HCT116 (cell line): ENCODE measurements at regions of chr17 and their contacts with region 1.

Region 1: GRCh38 chr17:59440784-59441441 is 109.5 kb downstream of the YPEL2 start:
- DNase-seq: peak; percentile 93
- ATAC-seq: peak; percentile 100
- H3K4me3 ChIP-seq: no peak overlapping the region
- H3K27ac ChIP-seq: no peak overlapping the region
- H3K4me1 ChIP-seq: no peaks in the 10 kb centered on the region
- H3K27me3 ChIP-seq: no peaks in the 10 kb centered on the region
- CTCF ChIP-seq: peak; percentile 97 to 98 (median 97)
- POLR2A ChIP-seq: no peak
- RAD21 ChIP-seq: peak; percentile 99

Region 2: DNA sequence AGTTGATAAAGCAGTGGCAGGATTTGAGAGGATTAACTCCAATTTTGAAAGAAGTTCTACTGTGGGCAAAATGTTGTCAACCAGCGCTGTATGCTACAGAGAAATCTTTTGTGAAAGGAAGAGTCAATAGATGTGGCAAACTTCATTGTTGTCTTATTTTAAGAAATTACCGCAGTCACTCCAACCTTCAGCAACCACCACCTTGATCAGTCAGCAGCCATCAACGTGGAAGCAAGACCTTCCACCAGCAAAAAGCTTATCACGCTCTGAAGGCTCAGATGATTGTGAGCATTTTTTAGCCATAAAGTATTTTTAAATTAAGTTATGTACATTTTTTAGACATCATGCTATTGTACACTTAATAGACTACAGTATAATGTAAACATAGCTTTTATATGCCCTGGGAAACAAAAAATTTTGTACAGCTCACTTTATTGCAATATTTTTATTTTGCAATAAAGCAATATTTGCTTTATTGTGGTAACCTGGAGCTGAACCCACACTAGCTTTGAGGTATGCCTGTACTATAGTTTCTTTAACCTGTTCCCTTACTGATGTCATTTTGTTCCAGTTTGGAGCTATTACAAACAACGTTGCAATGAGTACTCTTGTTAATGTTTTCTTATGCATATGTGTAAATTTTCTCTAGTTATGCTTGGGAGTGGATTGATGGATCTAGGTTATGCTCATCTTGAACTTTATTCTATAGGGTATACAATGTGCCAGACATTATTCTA is 540.6 kb before region 1 on chr17:
- CTCF ChIA-PET with region 1: no interaction called
- POLR2A ChIA-PET with region 1: no interaction called
- RAD21 ChIA-PET with region 1: no interaction called
- intact Hi-C with region 1: no loop called
- DNase-seq: no peak
- ATAC-seq: no peak
- H3K4me3 ChIP-seq: no peak overlapping the region
- H3K27ac ChIP-seq: no peak overlapping the region
- H3K4me1 ChIP-seq: no peaks in the 10 kb centered on the region
- H3K27me3 ChIP-seq: no peaks in the 10 kb centered on the region
- CTCF ChIP-seq: no peak
- POLR2A ChIP-seq: no peak
- RAD21 ChIP-seq: no peak

Region 3: GRCh38 chr17:59220376-59221158 is 220.3 kb before region 1 on chr17 and contains the start of gene GDPD1:
- CTCF ChIA-PET with region 1: no interaction called
- POLR2A ChIA-PET with region 1: no interaction called
- RAD21 ChIA-PET with region 1: no interaction called
- intact Hi-C with region 1: loop called (anchors 2 kb)
- DNase-seq: peak; percentile 89
- ATAC-seq: peak; percentile 97
- H3K4me3 ChIP-seq: peak within 1 kb of the TSS; percentile 90 to 99
- H3K27ac ChIP-seq: peak within 1 kb of the TSS; percentile 63
- H3K4me1 ChIP-seq: peaks cover 15 to 28% of the 10 kb centered on the region in 2 experiments; a peak in 3 of 4 replicates
- H3K27me3 ChIP-seq: no peaks in the 10 kb centered on the region
- CTCF ChIP-seq: peak; percentile 46 to 72 (median 71); a peak in 4 of 6 replicates
- POLR2A ChIP-seq: peak; percentile 73
- RAD21 ChIP-seq: peak; percentile 88
- total RNA-seq, gene GDPD1: 13.7 TPM

Region 4: GRCh38 chr17:59311130-59311920 is 129.6 kb before region 1 on chr17:
- CTCF ChIA-PET with region 1: interaction called, 58 read pairs
- POLR2A ChIA-PET with region 1: interaction called, 3 read pairs
- RAD21 ChIA-PET with region 1: interaction called, 5 to 11 read pairs
- intact Hi-C with region 1: loop called (anchors 1 kb)
- DNase-seq: peak; percentile 78
- ATAC-seq: peak; percentile 93
- H3K4me3 ChIP-seq: no peak overlapping the region
- H3K27ac ChIP-seq: no peak overlapping the region
- H3K4me1 ChIP-seq: peaks cover 3 to 13% of the 10 kb centered on the region in 2 experiments; a peak in 3 of 4 replicates
- H3K27me3 ChIP-seq: no peaks in the 10 kb centered on the region
- CTCF ChIP-seq: peak; percentile 84 to 99 (median 97); a peak in 5 of 6 replicates
- POLR2A ChIP-seq: no peak
- RAD21 ChIP-seq: peak; percentile 98

Region 5: DNA sequence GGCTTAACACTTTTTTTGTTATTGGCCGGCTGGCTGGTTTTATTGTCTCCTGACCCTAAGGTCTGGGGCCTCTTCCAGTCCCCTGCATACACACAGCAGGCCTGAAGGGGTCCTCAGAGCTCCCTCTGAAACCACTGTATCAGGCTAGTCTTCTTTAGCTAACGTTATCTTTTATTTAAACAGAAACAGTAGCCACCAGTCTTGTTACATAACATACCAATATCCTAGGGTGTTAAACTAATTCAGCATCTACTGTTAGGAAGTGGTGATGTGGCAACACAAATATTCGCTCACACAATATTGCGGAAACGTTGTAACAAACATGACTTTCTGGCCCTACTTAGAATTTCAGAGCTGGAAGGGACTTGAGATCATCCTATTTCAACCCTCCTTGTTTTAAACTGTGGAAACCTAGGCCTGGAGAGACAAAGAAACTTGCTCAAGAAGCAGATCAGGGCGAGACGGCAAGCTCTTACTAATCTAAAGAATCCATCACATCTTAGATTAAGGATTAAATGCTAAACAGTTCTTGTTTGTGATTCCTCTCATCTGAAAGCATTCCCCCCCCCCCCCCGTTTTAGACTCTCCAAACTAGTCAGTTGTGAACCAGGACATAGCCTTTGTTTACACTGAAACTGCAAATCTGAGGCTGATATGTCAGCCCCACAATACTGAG is 111.1 kb before region 1 on chr17:
- CTCF ChIA-PET with region 1: interaction called, 22 read pairs
- POLR2A ChIA-PET with region 1: interaction called, 3 read pairs
- RAD21 ChIA-PET with region 1: interaction called, 5 to 6 read pairs
- intact Hi-C with region 1: loop called (anchors 1 kb)
- DNase-seq: peak; percentile 62
- ATAC-seq: peak; percentile 65
- H3K4me3 ChIP-seq: no peak overlapping the region
- H3K27ac ChIP-seq: no peak overlapping the region
- H3K4me1 ChIP-seq: peaks cover 14 to 27% of the 10 kb centered on the region in 2 experiments
- H3K27me3 ChIP-seq: peaks cover 26% of the 10 kb centered on the region
- CTCF ChIP-seq: peak; percentile 65 to 90 (median 87); a peak in 5 of 6 replicates
- POLR2A ChIP-seq: no peak
- RAD21 ChIP-seq: peak; percentile 84

Region 6: DNA sequence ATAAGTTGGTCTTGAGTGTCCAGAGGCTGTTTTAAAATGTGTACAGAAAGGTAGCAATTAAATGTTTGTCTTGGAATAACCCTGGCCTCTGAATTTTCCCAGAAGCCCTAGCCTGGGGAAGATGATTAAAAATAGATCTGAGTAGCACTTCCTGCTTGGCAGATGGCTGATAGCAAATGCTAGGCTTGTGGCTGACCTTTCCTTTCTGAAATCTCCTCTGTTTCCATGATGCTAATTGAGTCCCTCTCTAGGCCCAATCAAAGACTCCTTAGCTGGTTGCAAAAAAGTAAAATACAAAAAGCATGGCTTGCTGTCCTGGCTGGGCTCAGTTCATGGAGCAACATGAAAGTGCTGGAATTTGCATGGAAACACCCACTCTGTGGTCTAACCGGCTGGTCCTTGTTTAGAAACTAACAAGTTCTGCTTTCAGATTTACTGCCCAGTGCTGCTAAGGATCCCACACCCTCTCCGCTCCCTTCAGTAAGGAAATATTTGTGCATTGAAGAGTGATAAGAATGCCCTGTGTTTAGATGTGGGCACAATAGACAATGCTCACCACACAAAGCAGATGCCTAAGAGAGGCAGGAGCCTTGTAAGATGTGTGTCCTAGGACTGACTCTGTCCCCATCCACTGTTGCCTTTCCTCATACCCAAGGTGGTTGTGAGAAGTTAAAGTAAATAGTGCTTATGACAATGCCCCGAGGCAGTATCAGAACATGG is 68.6 kb before region 1 on chr17:
- CTCF ChIA-PET with region 1: no interaction called
- POLR2A ChIA-PET with region 1: no interaction called
- RAD21 ChIA-PET with region 1: no interaction called
- intact Hi-C with region 1: no loop called
- DNase-seq: no peak
- ATAC-seq: no peak
- H3K4me3 ChIP-seq: no peak overlapping the region
- H3K27ac ChIP-seq: no peak overlapping the region
- H3K4me1 ChIP-seq: peaks cover 18 to 24% of the 10 kb centered on the region in 2 experiments
- H3K27me3 ChIP-seq: no peaks in the 10 kb centered on the region
- CTCF ChIP-seq: no peak
- POLR2A ChIP-seq: no peak
- RAD21 ChIP-seq: no peak

Region 7: GRCh38 chr17:59572301-59572928 is 131.5 kb after region 1 on chr17:
- CTCF ChIA-PET with region 1: no interaction called
- POLR2A ChIA-PET with region 1: no interaction called
- RAD21 ChIA-PET with region 1: no interaction called
- intact Hi-C with region 1: no loop called
- DNase-seq: no peak
- ATAC-seq: no peak
- H3K4me3 ChIP-seq: no peak overlapping the region
- H3K27ac ChIP-seq: no peak overlapping the region
- H3K4me1 ChIP-seq: no peaks in the 10 kb centered on the region
- H3K27me3 ChIP-seq: no peaks in the 10 kb centered on the region
- CTCF ChIP-seq: no peak
- POLR2A ChIP-seq: no peak
- RAD21 ChIP-seq: no peak